RWPE1 (cell line): ENCODE measurements at regions of chr6 and their contacts with region 1.

Region 1: DNA sequence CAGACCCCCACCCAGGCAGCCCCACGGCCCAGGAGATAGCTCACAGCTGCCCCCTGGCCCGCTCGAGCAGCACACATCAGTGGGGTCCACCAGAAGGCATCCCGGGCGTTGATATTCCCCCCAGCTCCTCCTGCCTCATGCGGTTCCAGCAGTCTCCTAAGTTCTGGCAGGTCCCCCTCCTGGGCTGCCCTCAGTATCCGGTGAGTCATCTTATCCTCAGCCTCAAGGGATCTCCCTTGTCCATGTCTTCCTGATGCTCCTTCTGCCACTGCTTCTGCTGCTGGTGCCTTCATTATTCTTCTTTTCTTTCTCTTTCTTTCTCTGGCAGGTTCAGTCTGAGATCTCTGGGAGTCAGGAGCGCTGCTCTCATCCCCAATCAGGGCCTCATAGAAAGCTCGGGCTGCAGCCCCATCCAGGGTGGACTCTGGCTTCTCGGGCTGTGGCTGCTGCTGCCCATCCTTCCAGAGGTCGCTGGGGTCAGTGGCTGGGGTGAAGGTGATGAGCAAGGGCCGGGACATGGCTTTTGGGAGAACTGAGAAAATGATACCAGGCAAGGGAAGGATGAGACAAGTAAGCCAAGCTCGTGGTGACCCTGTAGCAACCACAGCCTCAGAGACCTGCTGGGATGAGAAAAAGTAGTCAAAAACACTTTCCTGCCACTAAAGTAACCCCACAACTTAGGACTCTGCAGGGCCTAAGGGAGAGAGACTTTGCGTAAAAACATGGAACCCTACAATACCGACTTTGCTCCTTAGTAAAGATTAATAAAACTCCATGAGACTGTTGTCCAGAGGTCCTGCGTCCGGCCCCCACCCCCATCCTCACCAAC is 622 bp downstream of the GPANK1 start:
- DNase-seq: peak; percentile 73
- H3K27ac ChIP-seq: peak overlapping the region; percentile 98
- CTCF ChIP-seq: no peak

Region 2: GRCh38 chr6:30686908-30687658 is 977.1 kb before region 1 on chr6:
- CTCF ChIA-PET with region 1: no interaction called
- POLR2A ChIA-PET with region 1: no interaction called
- DNase-seq: peak; percentile 89
- H3K27ac ChIP-seq: peak overlapping the region; percentile 97
- CTCF ChIP-seq: no peak

Region 3: DNA sequence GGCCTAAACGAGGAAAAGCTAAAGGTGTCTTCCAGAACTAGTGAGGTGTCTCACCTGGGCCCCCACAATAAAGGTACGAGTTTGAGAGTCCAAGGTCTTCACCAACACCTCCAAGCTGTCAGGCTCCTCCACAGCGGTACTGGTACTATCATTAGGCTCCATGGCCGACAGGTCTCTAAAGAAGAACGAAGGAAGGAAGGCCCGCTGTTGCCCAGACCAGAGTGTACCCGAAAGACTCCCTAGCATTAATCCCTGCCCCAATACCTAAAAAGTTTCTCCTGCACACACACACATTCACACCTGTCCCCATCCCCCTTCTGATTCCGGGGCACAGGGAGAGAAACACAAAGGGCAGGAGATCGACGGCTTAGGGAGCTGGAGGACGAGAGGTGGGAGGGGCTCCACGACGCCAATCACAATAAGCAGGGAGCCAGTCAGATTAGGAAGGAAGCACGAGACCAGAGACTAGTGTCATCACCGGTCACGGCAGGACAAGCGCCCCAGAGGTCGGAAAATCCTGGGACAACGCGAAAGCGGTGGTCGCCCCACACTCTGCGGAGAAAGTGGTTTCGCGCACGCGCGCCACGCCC is 12.5 kb before region 1 on chr6:
- CTCF ChIA-PET with region 1: interaction called, 3 read pairs
- POLR2A ChIA-PET with region 1: interaction called, 11 read pairs
- DNase-seq: peak; percentile 82
- H3K27ac ChIP-seq: peak overlapping the region; percentile 96
- CTCF ChIP-seq: no peak

Region 4: DNA sequence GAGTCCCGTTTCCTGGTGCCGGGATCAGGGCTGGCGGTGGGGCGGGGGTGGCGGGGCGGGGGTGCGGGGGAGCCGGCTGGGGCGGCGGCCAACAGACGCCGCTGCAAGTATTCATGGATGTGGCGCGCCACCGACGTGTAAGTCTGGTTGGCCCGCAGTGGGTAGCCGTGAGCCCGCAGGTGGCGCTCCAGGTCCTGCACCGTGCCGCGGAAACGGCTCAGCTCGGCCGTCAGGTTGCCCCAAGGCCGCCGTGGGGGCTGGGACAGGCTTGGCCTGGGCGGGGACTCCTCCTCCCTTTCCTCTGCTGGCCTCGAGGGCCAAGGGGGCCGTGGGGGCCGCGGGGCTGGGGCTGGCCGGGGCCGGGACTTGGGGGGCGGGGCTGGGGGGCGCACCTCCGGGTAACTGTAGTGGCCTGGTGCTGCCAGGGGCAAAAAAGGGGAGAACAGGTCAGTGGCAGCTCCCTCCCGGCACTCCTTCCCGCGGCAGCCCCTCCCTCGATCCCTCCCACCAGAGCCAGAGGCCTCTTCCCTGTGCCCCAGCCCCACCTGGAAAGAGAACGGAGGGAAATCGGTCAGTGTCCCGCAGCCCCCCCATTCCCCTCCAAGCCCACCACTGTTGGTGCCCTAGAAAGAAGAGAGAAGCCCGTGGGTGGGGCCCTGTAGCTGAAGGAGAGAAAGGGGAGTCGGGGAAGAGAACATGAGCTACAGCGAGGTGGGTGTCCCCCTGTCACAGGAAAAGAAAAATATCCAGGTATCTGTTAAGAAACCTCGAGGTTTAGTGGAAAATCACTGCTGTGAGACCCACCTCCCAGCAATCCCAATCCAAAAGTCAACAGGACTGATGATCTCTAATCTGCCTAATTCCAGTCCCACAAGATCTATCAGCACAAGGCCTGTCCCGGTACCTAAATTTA is 423.7 kb after region 1 on chr6:
- CTCF ChIA-PET with region 1: no interaction called
- POLR2A ChIA-PET with region 1: no interaction called
- DNase-seq: peak; percentile 65
- H3K27ac ChIP-seq: peak overlapping the region; percentile 71
- CTCF ChIP-seq: peak; percentile 55